Right lobe of liver (tissue), 6 donors: ENCODE measurements at regions of chr2 and their contacts with region 1.

Region 1: DNA sequence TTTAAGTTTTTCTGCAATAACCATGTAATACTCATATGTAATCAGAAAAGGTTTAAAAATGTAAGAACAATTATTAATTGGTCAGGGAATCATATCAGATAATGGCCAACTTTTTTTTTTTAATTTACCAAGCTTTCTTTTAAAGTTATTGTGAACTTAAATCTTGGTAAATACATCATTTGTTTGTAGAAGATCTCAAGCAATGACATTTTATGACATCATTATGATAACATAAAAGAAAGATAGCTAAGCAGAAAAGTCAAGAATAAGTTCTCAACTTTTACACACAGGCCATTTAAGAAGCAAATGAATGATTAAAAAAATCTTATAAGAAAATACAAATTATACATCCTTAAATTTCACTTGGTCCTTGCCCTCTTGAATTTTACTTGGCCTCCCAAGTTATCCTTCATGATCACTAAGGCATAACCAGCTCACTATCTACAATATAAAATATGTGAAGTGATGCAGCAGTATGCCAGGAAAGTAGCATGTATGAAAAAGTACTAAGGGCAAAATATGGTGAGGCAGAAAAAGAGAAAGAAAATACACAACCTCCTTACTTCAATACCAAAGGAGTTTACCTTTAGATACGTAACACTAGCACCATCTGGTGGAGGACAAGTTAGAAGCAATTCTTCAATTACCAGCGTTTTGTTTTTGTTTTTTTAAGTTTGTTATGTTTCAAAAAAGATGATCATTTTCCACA is 116.6 kb downstream of the SRBD1 start:
- DNase-seq: no peak
- ATAC-seq: peak; percentile 46 to 66 (median 58)
- H3K4me3 ChIP-seq: no peak overlapping the region
- H3K27ac ChIP-seq: no peak overlapping the region
- H3K4me1 ChIP-seq: no peaks in the 10 kb centered on the region
- H3K27me3 ChIP-seq: no peaks in the 10 kb centered on the region
- CTCF ChIP-seq: peak; percentile 73 to 80 (median 77)
- POLR2A ChIP-seq: no peak

Region 2: GRCh38 chr2:44975571-44976450 is 518.6 kb before region 1 on chr2:
- intact Hi-C with region 1: loop called in 1 of 2 experiments (anchors 5 kb)
- DNase-seq: no peak
- ATAC-seq: no peak
- H3K4me3 ChIP-seq: no peak overlapping the region
- H3K27ac ChIP-seq: no peak overlapping the region
- H3K4me1 ChIP-seq: no peaks in the 10 kb centered on the region
- H3K27me3 ChIP-seq: no peaks in the 10 kb centered on the region
- CTCF ChIP-seq: no peak
- POLR2A ChIP-seq: no peak

Region 3: DNA sequence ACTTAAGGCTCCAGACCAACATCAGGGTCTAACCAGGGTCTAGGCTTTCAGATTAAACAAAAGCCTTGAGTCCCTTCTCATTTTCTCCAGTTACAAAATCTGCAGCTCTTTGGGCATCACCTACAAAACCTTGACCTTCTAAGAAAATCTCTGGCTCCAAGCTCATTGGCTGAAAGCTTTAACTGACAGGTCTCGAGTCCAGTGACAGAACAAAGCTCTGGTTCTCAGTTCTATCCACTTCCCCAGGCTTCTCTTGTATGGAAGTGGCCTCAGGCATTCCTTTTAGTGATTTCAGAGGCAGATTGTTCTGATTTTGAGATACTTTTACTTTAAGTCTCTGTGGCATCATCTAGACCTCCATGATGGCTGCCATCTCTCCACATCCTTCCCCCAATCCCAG is 496.5 kb before region 1 on chr2:
- intact Hi-C with region 1: loop called in 1 of 2 experiments (anchors 10 kb)
- DNase-seq: no peak
- ATAC-seq: no peak
- H3K4me3 ChIP-seq: no peak overlapping the region
- H3K27ac ChIP-seq: no peak overlapping the region
- H3K4me1 ChIP-seq: peaks cover 0 to 11% (median 0%) of the 10 kb centered on the region in 4 donors
- H3K27me3 ChIP-seq: peaks cover 4 to 21% of the 10 kb centered on the region in 2 donors
- CTCF ChIP-seq: no peak
- POLR2A ChIP-seq: no peak